Endothelial cell of umbilical vein (primary cell): ENCODE measurements at regions of chr6 and their contacts with region 1.

Region 1: GRCh38 chr6:46993846-46994245 is 48.3 kb downstream of the ADGRF1 start:
- DNase-seq: peak; percentile 84
- H3K4me3 ChIP-seq: no peak overlapping the region
- H3K27ac ChIP-seq: peak overlapping the region; percentile 83
- H3K4me1 ChIP-seq: peaks cover 38% of the 10 kb centered on the region
- H3K27me3 ChIP-seq: no peaks in the 10 kb centered on the region
- CTCF ChIP-seq: no peak
- POLR2A ChIP-seq: no peak

Region 2: GRCh38 chr6:46090115-46091079 is 903.4 kb before region 1 on chr6:
- CTCF ChIA-PET with region 1: interaction called, 3 read pairs
- POLR2A ChIA-PET with region 1: no interaction called
- dilution Hi-C with region 1: no loop called
- intact Hi-C with region 1: loop called (anchors 1 kb)
- DNase-seq: peak; percentile 58
- H3K4me3 ChIP-seq: no peak overlapping the region
- H3K27ac ChIP-seq: no peak overlapping the region
- H3K4me1 ChIP-seq: no peaks in the 10 kb centered on the region
- H3K27me3 ChIP-seq: peaks cover 5 to 13% of the 10 kb centered on the region in 2 experiments
- CTCF ChIP-seq: peak; percentile 59 to 73
- POLR2A ChIP-seq: no peak

Region 3: DNA sequence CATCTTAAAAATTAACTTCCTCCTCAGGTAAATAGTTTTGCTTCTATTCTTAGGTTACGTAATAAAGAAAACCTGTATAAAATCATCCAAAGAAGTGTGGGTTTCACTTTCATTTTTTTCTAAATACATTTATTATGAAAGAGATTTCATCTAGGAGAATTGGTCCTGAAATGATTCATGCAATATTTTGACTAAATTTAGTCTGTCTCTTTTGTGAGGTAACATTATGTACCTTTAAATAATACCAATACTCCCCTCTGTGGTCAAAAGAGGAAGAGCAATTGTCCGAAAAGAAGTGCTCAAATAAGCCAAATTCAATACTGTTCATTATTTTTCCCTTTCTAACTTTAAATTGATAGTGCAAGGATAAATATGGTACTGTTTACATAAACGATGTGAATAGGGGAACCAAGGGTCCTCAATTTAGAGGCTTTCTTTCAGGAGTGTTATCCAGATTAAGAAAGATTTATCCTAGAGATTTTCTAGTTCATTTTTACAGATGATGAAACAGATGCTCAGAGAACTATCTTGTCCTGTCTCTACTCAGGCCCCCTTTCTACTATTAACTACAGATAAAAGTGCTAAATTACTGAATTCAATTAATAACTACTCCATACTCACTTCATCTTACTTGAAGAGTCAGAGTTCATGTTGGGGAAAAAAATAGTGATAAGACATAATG is 367.5 kb before region 1 on chr6:
- CTCF ChIA-PET with region 1: no interaction called
- POLR2A ChIA-PET with region 1: no interaction called
- dilution Hi-C with region 1: no loop called
- intact Hi-C with region 1: loop called (anchors 2 kb)
- DNase-seq: peak; percentile 27
- H3K4me3 ChIP-seq: no peak overlapping the region
- H3K27ac ChIP-seq: no peak overlapping the region
- H3K4me1 ChIP-seq: no peaks in the 10 kb centered on the region
- H3K27me3 ChIP-seq: no peaks in the 10 kb centered on the region
- CTCF ChIP-seq: peak in 1 of 2 donors; percentile 16
- POLR2A ChIP-seq: no peak

Region 4: GRCh38 chr6:46781478-46782378 is 212.1 kb before region 1 on chr6:
- CTCF ChIA-PET with region 1: no interaction called
- POLR2A ChIA-PET with region 1: no interaction called
- dilution Hi-C with region 1: no loop called
- intact Hi-C with region 1: loop called (anchors 1 kb)
- DNase-seq: peak; percentile 63
- H3K4me3 ChIP-seq: no peak overlapping the region
- H3K27ac ChIP-seq: no peak overlapping the region
- H3K4me1 ChIP-seq: no peaks in the 10 kb centered on the region
- H3K27me3 ChIP-seq: peaks cover 0 to 4% of the 10 kb centered on the region in 2 experiments
- CTCF ChIP-seq: peak; percentile 50 to 60
- POLR2A ChIP-seq: no peak

Region 5: DNA sequence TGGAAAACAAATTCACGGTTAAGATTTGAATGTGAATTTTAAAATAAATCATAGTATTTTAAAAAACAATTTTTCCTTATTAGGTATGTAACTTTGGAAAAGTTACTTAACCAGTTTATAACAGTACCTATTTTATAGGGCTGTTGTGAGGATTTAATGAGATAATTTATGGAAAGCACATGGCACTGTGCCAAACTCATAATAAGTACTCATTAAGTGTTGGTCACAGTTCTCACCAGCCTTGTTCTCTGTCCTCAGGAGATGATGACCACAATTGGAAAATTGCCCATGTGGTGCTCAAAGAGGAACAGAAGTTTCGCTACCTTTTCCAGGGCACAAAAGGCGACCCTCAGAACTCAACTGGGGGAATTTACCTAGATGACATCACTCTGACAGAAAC is 161.0 kb before region 1 on chr6:
- CTCF ChIA-PET with region 1: no interaction called
- POLR2A ChIA-PET with region 1: no interaction called
- dilution Hi-C with region 1: no loop called
- intact Hi-C with region 1: no loop called
- DNase-seq: no peak
- H3K4me3 ChIP-seq: no peak overlapping the region
- H3K27ac ChIP-seq: no peak overlapping the region
- H3K4me1 ChIP-seq: no peaks in the 10 kb centered on the region
- H3K27me3 ChIP-seq: peaks cover 4 to 5% of the 10 kb centered on the region in 2 experiments
- CTCF ChIP-seq: no peak
- POLR2A ChIP-seq: no peak

Region 6: GRCh38 chr6:46909371-46909770 is 84.5 kb before region 1 on chr6:
- CTCF ChIA-PET with region 1: interaction called, 6 read pairs
- POLR2A ChIA-PET with region 1: no interaction called
- dilution Hi-C with region 1: no loop called
- intact Hi-C with region 1: loop called (anchors 1 kb)
- DNase-seq: peak; percentile 93
- H3K4me3 ChIP-seq: no peak overlapping the region
- H3K27ac ChIP-seq: peak overlapping the region; percentile 88
- H3K4me1 ChIP-seq: peaks cover 32% of the 10 kb centered on the region
- H3K27me3 ChIP-seq: no peaks in the 10 kb centered on the region
- CTCF ChIP-seq: peak in 1 of 2 donors; percentile 3
- POLR2A ChIP-seq: no peak

Region 7: DNA sequence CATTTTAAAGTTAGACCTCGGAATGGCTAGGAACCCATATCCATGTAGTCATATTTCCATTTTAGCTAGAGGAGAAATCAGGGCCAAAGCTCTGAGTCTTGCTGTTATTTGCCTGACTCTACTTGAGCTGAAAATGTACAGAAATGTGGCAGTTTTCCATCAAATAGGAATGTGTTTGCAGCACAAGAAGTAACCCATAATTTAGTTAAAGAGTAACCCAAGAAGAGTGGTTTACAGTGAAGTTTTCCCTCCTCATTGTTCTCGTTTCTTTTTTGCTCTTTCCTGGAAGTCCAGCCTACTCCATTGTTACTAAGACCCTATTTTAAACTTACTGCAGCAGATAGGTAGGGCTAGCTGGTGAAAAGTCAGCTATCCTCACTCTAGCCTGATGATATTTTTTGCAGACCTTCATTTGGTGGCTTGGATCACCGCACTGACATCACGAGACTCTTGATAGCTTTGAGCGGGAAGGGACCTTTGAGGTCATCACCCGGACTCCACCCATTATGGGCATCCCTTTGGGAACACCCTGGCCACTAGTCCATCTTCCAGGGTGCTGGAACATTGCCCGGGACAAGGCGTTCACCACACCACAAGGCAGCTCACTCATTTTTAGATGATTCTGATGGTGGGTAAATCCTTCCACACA is 44.1 kb before region 1 on chr6:
- CTCF ChIA-PET with region 1: interaction called, 11 read pairs
- POLR2A ChIA-PET with region 1: no interaction called
- dilution Hi-C with region 1: no loop called
- intact Hi-C with region 1: loop called (anchors 1 kb)
- DNase-seq: peak; percentile 50
- H3K4me3 ChIP-seq: no peak overlapping the region
- H3K27ac ChIP-seq: peak overlapping the region; percentile 98
- H3K4me1 ChIP-seq: peaks cover 44% of the 10 kb centered on the region
- H3K27me3 ChIP-seq: no peaks in the 10 kb centered on the region
- CTCF ChIP-seq: no peak
- POLR2A ChIP-seq: no peak

Region 8: DNA sequence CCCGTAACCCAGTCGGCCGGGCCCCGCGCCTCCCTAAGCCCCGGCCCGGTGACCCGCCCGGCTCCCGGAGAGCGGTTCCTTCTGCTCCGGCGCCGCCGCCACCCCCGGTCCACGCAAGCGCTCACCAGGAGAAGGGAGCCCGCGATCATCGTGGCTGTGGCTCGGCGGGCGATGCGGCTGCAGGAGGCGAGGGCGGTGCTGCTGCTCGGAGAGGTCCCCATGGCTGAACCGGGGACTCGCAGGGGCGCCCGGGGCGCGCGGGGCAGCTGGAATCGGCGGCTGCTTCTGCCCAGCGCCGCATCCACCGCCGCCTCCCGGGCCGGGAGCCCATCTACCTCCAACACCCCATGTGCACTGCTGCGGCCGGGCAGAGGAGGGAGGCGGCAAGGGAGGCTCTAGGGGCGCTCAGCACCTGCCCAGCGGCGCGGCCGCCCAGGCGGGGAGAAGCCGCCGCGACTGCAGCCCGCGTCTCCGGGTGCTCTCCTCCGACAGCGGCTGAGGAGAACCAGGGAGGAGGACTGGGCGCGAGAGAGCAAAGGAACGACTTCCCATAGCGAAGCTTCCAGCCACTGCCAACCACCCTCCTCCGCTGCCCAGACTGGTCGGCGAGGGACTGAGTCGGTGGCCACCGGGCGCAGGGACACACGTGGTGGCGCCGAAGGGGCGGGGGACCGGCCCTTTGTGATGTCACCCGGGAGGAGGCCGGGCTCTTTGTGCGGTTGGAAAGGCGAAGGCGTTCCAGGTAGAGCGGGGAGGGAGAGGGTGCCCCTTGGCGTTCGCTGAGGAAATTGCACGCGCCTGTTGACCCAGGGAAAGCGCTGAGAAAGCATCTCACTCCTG is 315.7 kb after region 1 on chr6 and contains the start of gene TNFRSF21:
- CTCF ChIA-PET with region 1: no interaction called
- POLR2A ChIA-PET with region 1: no interaction called
- dilution Hi-C with region 1: no loop called
- intact Hi-C with region 1: loop called (anchors 1 kb)
- DNase-seq: peak; percentile 95
- H3K4me3 ChIP-seq: peak within 1 kb of the TSS; percentile 49 to 86 (median 80)
- H3K27ac ChIP-seq: peak within 1 kb of the TSS; percentile 60
- H3K4me1 ChIP-seq: peaks cover 16% of the 10 kb centered on the region
- H3K27me3 ChIP-seq: no peaks in the 10 kb centered on the region
- CTCF ChIP-seq: peak; percentile 93 to 94
- POLR2A ChIP-seq: peak; percentile 82
- total RNA-seq, gene TNFRSF21: 40.6 and 52.3 TPM in 2 replicates

Region 9: GRCh38 chr6:47455534-47456209 is 461.8 kb after region 1 on chr6:
- CTCF ChIA-PET with region 1: no interaction called
- POLR2A ChIA-PET with region 1: no interaction called
- dilution Hi-C with region 1: no loop called
- intact Hi-C with region 1: no loop called
- DNase-seq: no peak
- H3K4me3 ChIP-seq: no peak overlapping the region
- H3K27ac ChIP-seq: no peak overlapping the region
- H3K4me1 ChIP-seq: no peaks in the 10 kb centered on the region
- H3K27me3 ChIP-seq: no peaks in the 10 kb centered on the region
- CTCF ChIP-seq: no peak
- POLR2A ChIP-seq: no peak